HepG2 (cell line): ENCODE measurements at regions of chr14 and their contacts with region 1.

Region 1: DNA sequence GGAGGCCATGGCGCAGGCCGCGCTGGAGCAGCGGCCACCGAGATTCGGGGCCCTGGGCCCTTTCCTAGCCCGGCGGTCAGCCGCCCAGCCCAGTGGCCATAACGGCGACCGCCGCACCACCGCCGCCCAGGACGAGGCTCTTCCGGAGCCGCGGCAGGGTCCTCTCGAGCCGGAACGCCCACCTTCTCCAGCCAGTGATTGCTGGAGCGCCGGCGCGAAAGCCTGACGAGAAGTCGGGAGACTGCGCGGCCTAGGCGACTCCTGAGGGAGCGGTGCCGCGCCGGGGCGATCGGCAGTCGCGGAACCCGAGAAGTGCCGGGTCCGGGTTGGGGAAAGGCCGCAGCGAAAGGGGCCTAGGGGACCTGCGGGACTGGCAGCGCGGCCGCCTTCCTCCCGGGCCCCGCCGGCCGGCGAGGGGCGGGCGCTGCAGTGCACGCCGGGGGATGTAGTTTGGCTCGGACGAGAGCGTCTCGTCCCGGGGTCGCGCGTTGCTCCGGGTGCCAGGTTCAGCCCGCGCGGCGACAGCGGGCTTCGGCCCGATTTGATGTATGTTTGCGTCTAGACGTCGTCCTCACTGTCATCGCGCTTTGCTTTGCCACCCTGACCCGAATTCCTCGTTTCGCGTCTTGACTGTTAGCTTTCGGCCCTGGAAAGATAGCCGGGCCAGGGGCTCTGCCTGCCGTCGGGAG is at the start of gene VTI1B:
- DNase-seq: peak; percentile 65
- ATAC-seq: peak; percentile 95
- H3K4me3 ChIP-seq: peak within 1 kb of the TSS; percentile 89 to 100 (median 95)
- H3K27ac ChIP-seq: peak within 1 kb of the TSS; percentile 98
- H3K4me1 ChIP-seq: peaks cover 20% of the 10 kb centered on the region
- H3K27me3 ChIP-seq: no peaks in the 10 kb centered on the region; a peak in 1 of 5 replicates
- CTCF ChIP-seq: peak; percentile 64
- EP300 ChIP-seq: no peak
- POLR2A ChIP-seq: peak; percentile 57 to 73
- RAD21 ChIP-seq: no peak; the same call in 1 of the 2 replicates
- total RNA-seq, gene VTI1B: 93.4 and 103 TPM in 2 replicates

Region 2: GRCh38 chr14:67695394-67695949 is 20.8 kb after region 1 on chr14 and contains the start of gene RDH11:
- CTCF ChIA-PET with region 1: no interaction called
- POLR2A ChIA-PET with region 1: interaction called, 13 read pairs
- in situ Hi-C with region 1: loop called (anchors 5 kb)
- intact Hi-C with region 1: no loop called
- DNase-seq: peak; percentile 90
- ATAC-seq: peak; percentile 96
- H3K4me3 ChIP-seq: peak within 1 kb of the TSS; percentile 94 to 99 (median 96)
- H3K27ac ChIP-seq: peak within 1 kb of the TSS; percentile 96
- H3K4me1 ChIP-seq: peaks cover 52% of the 10 kb centered on the region
- H3K27me3 ChIP-seq: no peaks in the 10 kb centered on the region; a peak in 1 of 5 replicates
- CTCF ChIP-seq: 0 out of 2 replicates have a peak, but pooled peaks have one; percentile 7
- EP300 ChIP-seq: no peak
- POLR2A ChIP-seq: peak; percentile 97 to 98
- RAD21 ChIP-seq: 0 out of 2 replicates have a peak, but pooled peaks have one; percentile 17
- total RNA-seq, gene RDH11: 51.5 and 106 TPM in 2 replicates